Prostate gland (tissue), 2 donors: ENCODE measurements at regions of chr6 and their contacts with region 1.

Region 1: DNA sequence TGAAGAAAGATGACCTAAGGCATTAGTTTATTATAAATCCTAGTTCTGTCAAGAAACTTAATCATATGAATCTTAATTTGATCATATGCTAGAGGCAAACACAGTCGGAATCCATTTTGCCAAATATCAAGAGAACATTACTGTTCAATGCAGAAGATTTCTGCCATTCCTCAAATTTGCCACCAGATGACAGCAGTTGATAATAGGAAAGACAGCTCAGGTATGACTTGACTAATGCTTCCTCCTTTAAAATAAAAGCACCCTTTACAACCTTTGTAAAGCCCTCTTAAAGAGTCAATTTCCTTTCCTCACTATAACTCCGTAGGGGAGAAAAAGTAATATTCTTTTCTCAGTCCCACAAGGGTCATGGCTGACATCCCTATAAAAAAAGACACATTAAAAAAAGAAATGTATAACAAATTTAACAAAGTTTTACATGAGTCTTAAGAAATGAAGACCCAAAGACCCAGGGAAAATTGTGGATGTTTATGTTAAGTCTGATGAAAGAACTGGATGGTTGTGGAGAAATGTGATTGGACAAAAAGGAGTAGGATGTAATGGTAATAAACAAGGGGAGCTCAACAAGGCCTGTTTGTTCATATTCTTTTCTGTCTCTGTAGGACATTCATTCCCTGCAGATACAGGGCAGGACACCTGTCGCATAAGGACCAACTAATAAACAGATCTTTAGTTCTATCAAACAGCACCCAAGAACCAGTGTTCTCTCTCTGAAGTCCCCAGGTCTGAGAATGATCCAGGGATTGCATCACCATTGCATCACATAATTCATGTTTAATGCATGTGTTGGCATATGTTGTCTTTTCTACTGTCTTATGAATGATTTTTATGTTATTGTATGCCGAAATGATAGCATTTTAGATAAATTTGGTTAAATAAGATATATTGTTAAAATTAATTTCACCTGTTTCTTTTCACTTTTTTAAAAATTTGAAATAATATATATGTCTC is 23.0 kb upstream of the IL17A start:
- DNase-seq: no peak
- H3K4me3 ChIP-seq: no peak overlapping the region
- H3K27ac ChIP-seq: no peak overlapping the region
- H3K4me1 ChIP-seq: no peaks in the 10 kb centered on the region
- H3K27me3 ChIP-seq: peaks cover 6% of the 10 kb centered on the region
- CTCF ChIP-seq: peak in 3 of 4 experiments; percentile 30 to 67 (median 51)
- POLR2A ChIP-seq: no peak

Region 2: DNA sequence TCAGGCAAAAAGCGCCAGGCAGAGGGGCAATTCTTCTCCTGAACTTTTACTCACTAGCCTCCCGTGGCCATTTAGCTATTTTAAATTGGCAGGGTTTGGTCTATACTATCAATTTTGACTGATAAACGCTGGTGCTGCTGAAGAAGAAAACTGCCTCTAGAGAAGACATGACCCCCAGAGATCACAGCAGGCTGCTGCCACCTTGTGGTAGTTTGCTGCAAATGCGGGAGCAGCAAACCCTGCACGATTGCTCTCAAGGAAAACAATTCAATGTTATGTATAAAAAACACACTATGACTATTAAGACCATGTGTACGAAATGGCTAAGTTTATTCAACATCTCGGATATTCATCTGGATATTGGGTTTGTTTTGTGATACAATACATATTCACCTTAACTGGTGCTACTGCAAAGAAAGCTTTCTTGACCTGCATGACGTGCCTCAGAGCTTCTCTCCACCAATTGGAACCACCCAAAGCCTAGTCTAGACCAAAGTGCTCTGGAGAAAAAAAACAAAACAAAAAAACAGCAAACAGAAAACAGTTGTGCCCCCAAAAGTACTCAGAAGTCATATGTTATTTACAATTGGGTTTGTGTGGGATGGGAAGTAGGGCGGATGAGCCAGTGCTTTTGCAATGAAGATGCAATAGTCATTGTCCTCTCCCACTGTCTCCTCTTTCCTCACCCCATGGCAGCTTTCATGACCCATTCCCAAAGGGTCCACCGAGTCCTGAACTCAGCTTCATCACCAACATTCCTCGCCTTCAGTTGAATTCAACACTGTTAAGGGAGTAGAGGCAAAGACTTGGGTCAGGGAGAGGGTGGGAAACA is 100.7 kb after region 1 on chr6:
- intact Hi-C with region 1: loop called (anchors 10 kb)
- DNase-seq: peak; percentile 21
- H3K4me3 ChIP-seq: no peak overlapping the region
- H3K27ac ChIP-seq: no peak overlapping the region
- H3K4me1 ChIP-seq: no peaks in the 10 kb centered on the region
- H3K27me3 ChIP-seq: no peaks in the 10 kb centered on the region
- CTCF ChIP-seq: peak; percentile 29 to 73 (median 68)
- POLR2A ChIP-seq: no peak